GM12878 (cell line): ENCODE measurements at regions of chr1 and their contacts with region 1.

Region 1: DNA sequence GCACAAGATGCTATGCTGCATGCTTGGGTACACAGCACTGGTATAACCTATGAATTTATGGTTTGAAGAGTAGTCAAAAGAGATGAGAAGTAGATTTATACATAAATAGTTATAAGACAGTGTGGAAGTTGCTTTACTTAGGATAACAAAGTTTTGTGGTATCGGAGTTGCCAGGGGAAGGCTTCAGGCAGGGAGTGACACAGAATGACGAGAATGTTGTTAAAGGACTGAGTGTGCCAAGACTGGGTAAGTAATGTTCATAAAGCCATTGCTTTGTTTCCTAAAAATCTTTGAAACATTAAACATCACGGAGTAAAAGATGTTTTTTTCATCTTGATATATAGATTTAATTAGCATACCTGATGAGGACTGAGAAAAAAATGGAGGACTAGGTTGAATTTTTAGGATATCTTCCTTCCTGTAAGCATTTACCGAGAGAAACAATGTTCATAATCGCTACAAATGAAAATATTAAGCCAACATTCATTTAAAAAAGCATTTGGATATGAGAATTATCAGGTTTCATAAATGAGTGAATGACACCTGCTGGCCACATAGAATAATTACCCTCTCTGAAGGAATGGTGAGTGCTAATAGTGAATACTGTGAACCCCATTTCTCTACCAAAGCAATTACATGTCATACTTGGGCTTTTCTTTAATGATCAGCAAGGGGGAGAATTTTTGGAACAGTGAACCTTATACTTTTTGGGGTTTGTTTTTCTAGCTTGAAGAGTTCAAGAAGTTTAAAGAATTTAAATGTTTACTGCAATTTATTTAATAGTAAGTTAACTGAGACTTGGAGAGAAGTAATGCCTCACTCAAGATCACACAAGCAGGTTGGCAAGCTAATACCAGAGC is 28.4 kb downstream of the EXTL2 start:
- DNase-seq: no peak
- ATAC-seq: peak; percentile 87
- H3K4me3 ChIP-seq: no peak overlapping the region
- H3K27ac ChIP-seq: no peak overlapping the region
- H3K4me1 ChIP-seq: peaks cover 9% of the 10 kb centered on the region; the same call in 1 of the 2 replicates
- H3K27me3 ChIP-seq: no peaks in the 10 kb centered on the region
- CTCF ChIP-seq: peak; percentile 35 to 64 (median 53); a peak in 5 of 6 replicates
- EP300 ChIP-seq: no peak
- POLR2A ChIP-seq: no peak
- RAD21 ChIP-seq: peak; percentile 68

Region 2: GRCh38 chr1:99180343-99180808 is 1685.9 kb before region 1 on chr1:
- CTCF ChIA-PET with region 1: interaction called, 3 read pairs
- POLR2A ChIA-PET with region 1: no interaction called
- RAD21 ChIA-PET with region 1: no interaction called
- SMC1A ChIA-PET with region 1: no interaction called
- in situ Hi-C with region 1: loop called (anchors 25 kb)
- intact Hi-C with region 1: no loop called
- DNase-seq: peak; percentile 25
- ATAC-seq: peak; percentile 98
- H3K4me3 ChIP-seq: no peak overlapping the region
- H3K27ac ChIP-seq: no peak overlapping the region
- H3K4me1 ChIP-seq: no peaks in the 10 kb centered on the region
- H3K27me3 ChIP-seq: no peaks in the 10 kb centered on the region
- CTCF ChIP-seq: peak; percentile 69 to 87 (median 73)
- EP300 ChIP-seq: no peak
- POLR2A ChIP-seq: no peak
- RAD21 ChIP-seq: peak; percentile 92

Region 3: GRCh38 chr1:99814373-99814900 is 1051.8 kb before region 1 on chr1:
- CTCF ChIA-PET with region 1: interaction called, 9 read pairs
- POLR2A ChIA-PET with region 1: no interaction called
- RAD21 ChIA-PET with region 1: interaction called, 4 read pairs
- SMC1A ChIA-PET with region 1: interaction called, 5 read pairs
- in situ Hi-C with region 1: loop called (anchors 5 kb)
- intact Hi-C with region 1: loop called (anchors 2 kb)
- DNase-seq: no peak
- ATAC-seq: no peak
- H3K4me3 ChIP-seq: no peak overlapping the region
- H3K27ac ChIP-seq: no peak overlapping the region
- H3K4me1 ChIP-seq: no peaks in the 10 kb centered on the region
- H3K27me3 ChIP-seq: no peaks in the 10 kb centered on the region
- CTCF ChIP-seq: no peak
- EP300 ChIP-seq: no peak
- POLR2A ChIP-seq: no peak
- RAD21 ChIP-seq: no peak

Region 4: DNA sequence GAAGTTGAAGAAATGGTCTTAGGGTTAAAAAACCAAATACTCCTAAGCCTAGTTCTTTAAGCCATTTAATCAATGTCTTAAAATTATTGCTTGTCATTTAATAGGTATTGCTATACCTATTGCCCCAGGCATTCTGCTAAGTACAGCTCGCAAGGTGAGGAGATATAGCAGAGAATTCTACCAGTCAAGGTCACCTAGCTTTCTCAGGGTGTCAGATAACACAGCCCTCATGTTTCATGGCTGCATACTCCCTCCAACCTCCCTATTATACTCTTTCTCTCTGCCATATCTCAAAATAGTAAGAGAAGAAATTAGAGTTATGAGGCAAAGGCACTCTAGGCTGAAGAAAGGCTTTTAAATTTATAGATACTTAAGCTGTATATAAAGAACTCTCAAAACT is 396.7 kb before region 1 on chr1:
- CTCF ChIA-PET with region 1: interaction called, 261 read pairs
- POLR2A ChIA-PET with region 1: no interaction called
- RAD21 ChIA-PET with region 1: interaction called, 90 read pairs
- SMC1A ChIA-PET with region 1: interaction called, 59 read pairs
- in situ Hi-C with region 1: loop called (anchors 5 kb)
- intact Hi-C with region 1: no loop called
- DNase-seq: no peak
- ATAC-seq: no peak
- H3K4me3 ChIP-seq: no peak overlapping the region
- H3K27ac ChIP-seq: no peak overlapping the region
- H3K4me1 ChIP-seq: no peaks in the 10 kb centered on the region
- H3K27me3 ChIP-seq: no peaks in the 10 kb centered on the region
- CTCF ChIP-seq: no peak
- EP300 ChIP-seq: no peak
- POLR2A ChIP-seq: no peak
- RAD21 ChIP-seq: no peak

Region 5: GRCh38 chr1:100543640-100544039 is 322.6 kb before region 1 on chr1:
- CTCF ChIA-PET with region 1: interaction called, 4 read pairs
- POLR2A ChIA-PET with region 1: no interaction called
- RAD21 ChIA-PET with region 1: interaction called, 5 read pairs
- SMC1A ChIA-PET with region 1: interaction called, 13 read pairs
- in situ Hi-C with region 1: no loop called
- intact Hi-C with region 1: loop called (anchors 5 kb)
- DNase-seq: no peak
- ATAC-seq: peak; percentile 85
- H3K4me3 ChIP-seq: no peak overlapping the region
- H3K27ac ChIP-seq: no peak overlapping the region
- H3K4me1 ChIP-seq: peaks cover 12% of the 10 kb centered on the region
- H3K27me3 ChIP-seq: peaks cover 4 to 21% of the 10 kb centered on the region in 2 experiments
- CTCF ChIP-seq: peak; percentile 50 to 69 (median 64)
- EP300 ChIP-seq: no peak
- POLR2A ChIP-seq: no peak
- RAD21 ChIP-seq: peak; percentile 58

Region 6: DNA sequence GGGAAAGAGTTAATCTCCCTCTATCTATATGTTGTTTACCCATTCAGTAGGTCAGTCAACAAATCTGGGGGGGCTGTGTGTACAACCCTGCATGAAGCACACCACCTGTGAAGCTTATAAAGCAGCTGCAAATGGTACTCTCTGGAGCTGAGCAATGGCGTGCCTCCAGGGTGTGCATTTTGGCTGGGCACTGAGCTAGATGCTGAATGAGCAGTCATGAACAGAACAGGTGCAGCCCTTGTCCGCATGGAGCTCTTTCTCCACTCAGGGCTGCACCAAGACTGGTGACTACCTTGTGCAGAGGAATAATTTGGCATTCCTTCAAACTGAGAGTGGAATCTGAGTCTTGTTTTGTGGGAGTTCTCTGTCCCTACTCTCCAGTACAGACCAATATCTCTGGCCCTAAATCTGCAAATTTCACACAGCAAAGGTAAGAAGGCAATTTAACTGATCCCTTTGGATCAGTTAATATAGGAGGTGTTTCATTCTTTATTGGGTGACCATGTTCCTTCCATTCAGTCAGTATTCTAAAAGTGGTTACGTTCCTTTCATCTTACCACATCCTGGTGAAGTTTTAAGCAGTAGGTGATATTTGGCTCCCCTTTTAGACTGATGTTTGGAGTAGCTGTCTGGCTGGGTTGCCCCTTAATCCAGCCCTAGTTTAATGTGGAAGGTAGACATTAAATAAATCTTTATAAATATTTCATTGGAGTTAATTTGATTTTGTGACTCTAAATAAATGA is 252.3 kb before region 1 on chr1:
- CTCF ChIA-PET with region 1: interaction called, 15 read pairs
- POLR2A ChIA-PET with region 1: no interaction called
- RAD21 ChIA-PET with region 1: interaction called, 16 read pairs
- SMC1A ChIA-PET with region 1: interaction called, 4 read pairs
- in situ Hi-C with region 1: no loop called
- intact Hi-C with region 1: no loop called
- DNase-seq: no peak
- ATAC-seq: peak; percentile 51
- H3K4me3 ChIP-seq: no peak overlapping the region
- H3K27ac ChIP-seq: no peak overlapping the region
- H3K4me1 ChIP-seq: no peaks in the 10 kb centered on the region
- H3K27me3 ChIP-seq: no peaks in the 10 kb centered on the region
- CTCF ChIP-seq: no peak
- EP300 ChIP-seq: no peak
- POLR2A ChIP-seq: no peak
- RAD21 ChIP-seq: no peak

Region 7: DNA sequence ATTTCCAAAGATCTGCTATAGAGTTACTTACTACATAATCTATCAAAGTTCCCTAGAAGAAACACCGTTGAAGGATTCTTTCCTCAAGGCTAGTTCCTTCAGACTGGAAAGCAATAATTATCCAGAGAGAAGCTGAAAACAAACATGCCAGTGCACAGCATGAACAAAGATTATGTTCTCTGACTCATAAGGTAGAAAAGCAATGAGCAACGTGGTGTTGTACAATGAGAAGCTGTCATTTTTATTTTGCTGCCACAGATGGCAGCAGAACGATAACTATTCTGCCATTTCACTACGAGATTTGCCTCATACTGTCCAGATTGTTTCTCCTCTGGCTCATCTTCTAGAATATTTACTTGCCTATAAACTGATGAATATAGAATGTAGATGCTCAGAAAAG is 17.7 kb after region 1 on chr1:
- CTCF ChIA-PET with region 1: interaction called, 42 read pairs
- POLR2A ChIA-PET with region 1: no interaction called
- RAD21 ChIA-PET with region 1: interaction called, 8 read pairs
- SMC1A ChIA-PET with region 1: interaction called, 18 read pairs
- in situ Hi-C with region 1: no loop called
- intact Hi-C with region 1: no loop called
- DNase-seq: no peak
- ATAC-seq: no peak
- H3K4me3 ChIP-seq: no peak overlapping the region
- H3K27ac ChIP-seq: no peak overlapping the region
- H3K4me1 ChIP-seq: no peaks in the 10 kb centered on the region
- H3K27me3 ChIP-seq: no peaks in the 10 kb centered on the region
- CTCF ChIP-seq: no peak
- EP300 ChIP-seq: no peak
- POLR2A ChIP-seq: no peak
- RAD21 ChIP-seq: no peak